ENCODE measurements at regions of chr11 and their contacts with region 1.

Region 1: GRCh38 chr11:118198370-118198769 is 21.9 kb upstream of the SCN2B start:
- DNase-seq: peak; percentile 80 to 89
- ATAC-seq: peak in 2 of 4 donors; percentile 32 to 55
- H3K4me3 ChIP-seq: peak overlapping the region; percentile 43
- H3K27ac ChIP-seq: no peak overlapping the region
- H3K4me1 ChIP-seq: peaks cover 20% of the 10 kb centered on the region
- H3K27me3 ChIP-seq: no peaks in the 10 kb centered on the region
- CTCF ChIP-seq: peak; percentile 93

Region 2: DNA sequence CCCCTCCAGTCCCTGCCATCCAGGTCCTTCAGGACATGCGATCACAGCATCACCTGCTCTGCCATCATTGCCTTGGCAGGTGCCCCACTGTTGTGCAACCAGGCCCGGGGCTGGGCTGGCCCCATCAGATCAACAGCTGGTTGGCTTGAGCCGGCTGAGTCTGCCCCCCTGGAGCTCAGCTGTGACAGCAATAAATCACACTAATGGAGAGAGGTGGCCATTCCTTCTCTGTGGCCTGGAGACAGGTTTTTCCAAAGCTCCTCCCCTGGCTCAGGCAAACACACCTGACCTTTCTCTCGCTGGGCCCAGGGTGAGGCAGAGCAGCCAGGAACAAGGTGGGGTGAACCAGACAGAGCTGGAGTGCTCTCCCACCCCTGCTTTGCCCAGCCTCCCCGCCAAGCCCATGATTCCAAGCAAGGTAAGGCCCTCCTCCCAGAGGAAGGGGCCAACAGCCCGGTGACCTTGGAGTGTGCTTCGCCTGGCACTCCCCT is 364.9 kb before region 1 on chr11:
- intact Hi-C with region 1: no loop called
- DNase-seq: peak; percentile 81 to 93
- ATAC-seq: peak; percentile 92 to 96 (median 95)
- H3K4me3 ChIP-seq: no peak overlapping the region
- H3K27ac ChIP-seq: peak overlapping the region; percentile 60
- H3K4me1 ChIP-seq: peaks cover 12% of the 10 kb centered on the region
- H3K27me3 ChIP-seq: no peaks in the 10 kb centered on the region
- CTCF ChIP-seq: no peak

Region 3: GRCh38 chr11:118290923-118291322 is 92.6 kb after region 1 on chr11:
- intact Hi-C with region 1: loop called in 1 of 2 experiments (anchors 10 kb)
- DNase-seq: no peak
- ATAC-seq: peak in 1 of 4 donors; percentile 24
- H3K4me3 ChIP-seq: no peak overlapping the region
- H3K27ac ChIP-seq: no peak overlapping the region
- H3K4me1 ChIP-seq: no peaks in the 10 kb centered on the region
- H3K27me3 ChIP-seq: peaks cover 0 to 3% (median 0%) of the 10 kb centered on the region in 3 donors
- CTCF ChIP-seq: peak; percentile 10

Region 4: DNA sequence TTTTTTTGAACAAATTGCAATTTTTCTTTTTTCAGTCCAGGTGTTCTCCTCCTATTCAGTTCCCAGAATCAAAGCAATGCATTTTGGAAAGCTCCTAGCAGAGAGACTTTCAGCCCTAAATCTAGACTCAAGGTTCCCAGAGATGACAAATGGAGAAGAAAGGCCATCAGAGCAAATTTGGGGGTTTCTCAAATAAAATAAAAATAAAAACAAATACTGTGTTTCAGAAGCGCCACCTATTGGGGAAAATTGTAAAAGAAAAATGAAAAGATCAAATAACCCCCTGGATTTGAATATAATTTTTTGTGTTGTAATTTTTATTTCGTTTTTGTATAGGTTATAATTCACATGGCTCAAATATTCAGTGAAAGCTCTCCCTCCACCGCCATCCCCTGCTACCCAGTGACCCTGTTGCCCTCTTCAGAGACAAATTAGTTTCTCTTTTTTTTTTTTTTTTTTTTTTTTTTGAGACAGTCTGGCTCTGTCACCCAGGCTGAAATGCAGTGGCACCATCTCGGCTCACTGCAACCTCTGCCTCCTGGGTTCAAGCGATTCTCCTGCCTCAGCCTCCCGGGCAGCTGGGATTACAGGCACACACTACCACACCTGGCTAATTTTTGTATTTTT is 154.8 kb after region 1 on chr11:
- intact Hi-C with region 1: loop called (anchors 2 to 5 kb)
- DNase-seq: no peak
- ATAC-seq: no peak
- H3K4me3 ChIP-seq: no peak overlapping the region
- H3K27ac ChIP-seq: no peak overlapping the region
- H3K4me1 ChIP-seq: no peaks in the 10 kb centered on the region
- H3K27me3 ChIP-seq: no peaks in the 10 kb centered on the region
- CTCF ChIP-seq: peak; percentile 49

Region 5: DNA sequence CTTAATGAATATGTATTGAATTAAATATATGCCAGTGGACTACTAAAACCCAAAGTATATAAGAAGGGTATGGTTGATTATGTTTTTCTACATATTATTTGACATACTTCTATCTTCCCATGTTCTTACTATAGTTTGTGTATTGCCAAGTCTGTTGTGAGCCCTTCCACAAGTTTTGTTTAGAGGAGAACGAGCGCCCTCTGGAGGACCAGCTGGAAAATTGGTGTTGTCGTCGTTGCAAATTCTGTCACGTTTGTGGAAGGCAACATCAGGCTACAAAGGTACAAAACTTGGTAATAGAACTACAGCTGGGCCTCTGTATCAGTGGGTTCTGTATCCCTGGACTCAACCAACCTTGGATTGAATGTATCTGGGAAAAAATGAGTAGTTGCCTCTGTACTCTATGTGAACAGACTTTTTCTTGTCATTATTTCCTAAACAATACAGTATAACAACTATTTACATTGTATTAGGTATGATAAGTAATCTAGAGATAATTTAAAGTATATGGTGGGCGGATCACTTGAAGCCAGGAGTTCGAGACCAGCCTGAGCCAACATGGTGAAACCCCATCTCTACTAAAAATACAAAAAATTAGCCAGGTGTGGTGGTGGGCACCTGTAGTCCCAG is 290.2 kb after region 1 on chr11:
- intact Hi-C with region 1: loop called (anchors 2 to 5 kb)
- DNase-seq: peak; percentile 56 to 73
- ATAC-seq: peak; percentile 61 to 89 (median 69)
- H3K4me3 ChIP-seq: no peak overlapping the region
- H3K27ac ChIP-seq: no peak overlapping the region
- H3K4me1 ChIP-seq: no peaks in the 10 kb centered on the region
- H3K27me3 ChIP-seq: no peaks in the 10 kb centered on the region
- CTCF ChIP-seq: peak; percentile 76

Region 6: DNA sequence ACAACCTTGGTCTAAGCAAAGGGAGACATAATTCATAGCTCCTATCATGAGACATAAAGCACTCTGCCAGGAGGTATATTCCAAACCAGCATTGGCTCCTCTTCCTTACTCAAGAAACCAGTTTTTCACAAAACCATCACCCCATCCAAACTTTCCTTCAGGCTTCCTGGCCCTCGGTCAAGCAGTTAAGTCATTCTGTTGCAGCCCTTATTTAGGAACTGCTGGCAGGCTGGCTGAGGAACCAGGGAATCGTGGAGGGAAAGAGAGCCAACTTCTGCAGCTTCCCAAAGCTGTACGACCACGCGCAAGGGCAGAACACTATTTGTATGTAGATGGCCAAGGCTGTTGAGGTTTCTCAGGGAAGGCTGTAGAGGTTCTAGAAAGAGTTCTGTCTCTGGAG is 366.7 kb after region 1 on chr11:
- intact Hi-C with region 1: loop called in 1 of 2 experiments (anchors 5 kb)
- DNase-seq: peak; percentile 25 to 55
- ATAC-seq: peak in 3 of 4 donors; percentile 11 to 32 (median 15)
- H3K4me3 ChIP-seq: peak overlapping the region; percentile 94
- H3K27ac ChIP-seq: no peak overlapping the region
- H3K4me1 ChIP-seq: peaks cover 6% of the 10 kb centered on the region
- H3K27me3 ChIP-seq: no peaks in the 10 kb centered on the region
- CTCF ChIP-seq: no peak

Measured in psoas muscle (tissue), 8 donors.